GM12878 (cell line): ENCODE measurements at regions of chr2 and their contacts with region 1.

Region 1: GRCh38 chr2:103656558-103656957 is 894.7 kb downstream of the TMEM182 start:
- DNase-seq: no peak
- ATAC-seq: no peak
- H3K4me3 ChIP-seq: no peak overlapping the region
- H3K27ac ChIP-seq: no peak overlapping the region
- H3K4me1 ChIP-seq: no peaks in the 10 kb centered on the region
- H3K27me3 ChIP-seq: no peaks in the 10 kb centered on the region
- CTCF ChIP-seq: no peak
- EP300 ChIP-seq: no peak
- POLR2A ChIP-seq: no peak
- RAD21 ChIP-seq: no peak

Region 2: DNA sequence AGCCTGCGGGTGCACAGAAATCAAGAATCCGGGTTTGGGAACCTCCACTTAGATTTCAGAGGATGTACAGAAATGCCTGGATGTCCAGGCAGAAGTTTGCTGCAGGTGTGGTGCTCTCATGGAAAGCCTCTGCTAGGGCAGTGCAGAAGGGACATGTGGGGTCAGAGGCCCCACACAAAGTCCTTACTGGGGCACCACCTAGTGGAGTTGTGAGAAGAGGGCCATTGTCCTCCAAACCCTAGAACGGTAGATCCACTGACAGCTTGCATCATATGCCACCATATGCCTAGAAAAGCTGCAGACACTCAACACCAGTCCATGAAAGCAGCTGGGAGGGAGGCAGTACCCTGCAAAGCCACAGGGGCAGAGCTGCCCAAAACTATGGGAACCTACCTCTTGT is 61.7 kb before region 1 on chr2:
- CTCF ChIA-PET with region 1: no interaction called
- POLR2A ChIA-PET with region 1: no interaction called
- RAD21 ChIA-PET with region 1: no interaction called
- SMC1A ChIA-PET with region 1: no interaction called
- in situ Hi-C with region 1: no loop called
- intact Hi-C with region 1: loop called (anchors 5 kb)
- DNase-seq: no peak
- ATAC-seq: no peak
- H3K4me3 ChIP-seq: no peak overlapping the region
- H3K27ac ChIP-seq: no peak overlapping the region
- H3K4me1 ChIP-seq: no peaks in the 10 kb centered on the region
- H3K27me3 ChIP-seq: no peaks in the 10 kb centered on the region
- CTCF ChIP-seq: no peak
- EP300 ChIP-seq: no peak
- POLR2A ChIP-seq: no peak
- RAD21 ChIP-seq: no peak